ENCODE measurements at regions of chr4 and their contacts with region 1.

Region 1: GRCh38 chr4:99563310-99564186 is at the start of gene TRMT10A:
- DNase-seq: peak; percentile 98
- H3K4me3 ChIP-seq: peak within 1 kb of the TSS; percentile 41
- H3K27ac ChIP-seq: peak within 1 kb of the TSS; percentile 89
- H3K4me1 ChIP-seq: no peaks in the 10 kb centered on the region
- H3K27me3 ChIP-seq: no peaks in the 10 kb centered on the region
- CTCF ChIP-seq: no peak
- total RNA-seq, gene TRMT10A: 6.8 to 10.6 TPM

Region 2: GRCh38 chr4:99885063-99885664 is 321.6 kb after region 1 on chr4:
- intact Hi-C with region 1: loop called (anchors 5 kb)
- DNase-seq: no peak
- H3K4me3 ChIP-seq: no peak overlapping the region
- H3K27ac ChIP-seq: no peak overlapping the region
- H3K4me1 ChIP-seq: no peaks in the 10 kb centered on the region
- H3K27me3 ChIP-seq: no peaks in the 10 kb centered on the region
- CTCF ChIP-seq: peak; percentile 25

Region 3: GRCh38 chr4:99949034-99949998 is 385.8 kb after region 1 on chr4:
- intact Hi-C with region 1: loop called (anchors 5 kb)
- DNase-seq: peak; percentile 97
- H3K4me3 ChIP-seq: peak overlapping the region; percentile 69
- H3K27ac ChIP-seq: peak overlapping the region; percentile 94
- H3K4me1 ChIP-seq: peaks cover 14% of the 10 kb centered on the region
- H3K27me3 ChIP-seq: no peaks in the 10 kb centered on the region
- CTCF ChIP-seq: peak; percentile 74

Measured in colonic mucosa (tissue), 4 donors.